Ascending aorta (tissue), 2 donors: ENCODE measurements at regions of chr11 and their contacts with region 1.

Region 1: DNA sequence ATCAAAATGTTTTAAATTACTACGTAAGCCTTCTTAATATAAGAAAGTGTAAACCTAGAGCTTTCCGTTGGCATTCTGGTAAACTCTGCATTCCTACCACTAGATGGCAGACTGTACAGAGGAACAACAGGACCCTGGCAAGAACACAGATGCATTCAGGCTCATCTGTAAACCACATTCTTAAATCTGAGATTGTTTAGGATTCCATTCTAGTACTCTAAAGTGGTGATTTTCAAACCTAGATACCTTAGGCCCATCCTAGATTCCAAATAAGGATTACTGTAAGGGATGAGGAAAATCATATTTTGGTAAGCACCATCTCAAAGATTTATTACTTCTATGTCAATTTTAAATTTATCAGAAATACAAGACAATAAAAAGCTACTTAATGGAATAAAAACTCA is 26.9 kb downstream of the PICALM start:
- DNase-seq: peak in 1 of 2 donors; percentile 87
- H3K4me3 ChIP-seq: peak overlapping the region; percentile 47 to 52
- H3K27ac ChIP-seq: peak overlapping the region; percentile 48 to 61
- H3K4me1 ChIP-seq: peaks cover 11 to 65% of the 10 kb centered on the region in 2 donors
- H3K27me3 ChIP-seq: no peaks in the 10 kb centered on the region
- CTCF ChIP-seq: peak; percentile 81 to 85 (median 82)

Region 2: GRCh38 chr11:85525686-85526085 is 516.3 kb before region 1 on chr11:
- intact Hi-C with region 1: no loop called
- DNase-seq: no peak
- H3K4me3 ChIP-seq: no peak overlapping the region
- H3K27ac ChIP-seq: no peak overlapping the region
- H3K4me1 ChIP-seq: no peaks in the 10 kb centered on the region
- H3K27me3 ChIP-seq: no peaks in the 10 kb centered on the region
- CTCF ChIP-seq: no peak

Region 3: DNA sequence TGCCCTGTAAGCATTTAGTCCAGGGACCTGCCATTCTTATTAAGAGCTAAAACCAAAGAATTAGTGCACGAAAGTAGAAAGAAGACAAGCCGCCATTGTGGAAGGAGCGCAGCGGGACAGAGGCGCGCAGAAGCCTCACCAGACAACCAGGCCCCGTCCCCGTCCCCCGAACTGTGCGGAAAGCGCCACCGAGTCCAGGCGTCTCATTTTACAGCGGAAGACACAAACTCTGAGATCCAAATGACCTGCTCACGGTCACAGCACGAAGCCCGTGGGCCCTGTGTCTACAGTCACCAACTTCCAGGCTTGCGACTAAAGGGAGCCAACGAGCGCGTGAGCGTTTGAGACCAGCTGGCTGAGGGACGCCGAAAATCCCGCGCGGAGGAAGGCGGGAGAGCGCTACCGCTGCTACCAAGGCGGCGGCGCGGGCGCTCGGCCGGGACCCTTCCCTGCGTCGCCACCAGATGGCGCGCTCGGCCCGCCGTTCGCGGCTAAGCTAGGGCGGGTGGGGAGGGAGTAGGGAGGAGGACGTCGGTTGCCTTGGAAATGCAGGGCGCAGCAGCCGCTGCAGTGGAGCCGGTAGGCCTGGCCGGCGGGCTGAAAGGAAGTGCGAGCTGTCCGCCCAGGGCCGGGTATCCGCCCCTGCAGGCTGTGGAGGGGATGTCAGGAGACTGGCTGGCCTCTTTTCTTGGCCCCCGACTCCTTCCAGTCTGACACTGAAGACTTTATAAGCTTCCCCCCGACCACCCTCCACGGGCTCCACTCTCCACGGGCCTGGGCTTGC is 187.2 kb before region 1 on chr11:
- intact Hi-C with region 1: loop called (anchors 10 kb)
- DNase-seq: peak; percentile 65 to 95
- H3K4me3 ChIP-seq: peak overlapping the region; percentile 73 to 77
- H3K27ac ChIP-seq: peak overlapping the region; percentile 79 to 83
- H3K4me1 ChIP-seq: peaks cover 0 to 7% of the 10 kb centered on the region in 2 donors
- H3K27me3 ChIP-seq: no peaks in the 10 kb centered on the region
- CTCF ChIP-seq: peak; percentile 94 to 99 (median 99)

Region 4: DNA sequence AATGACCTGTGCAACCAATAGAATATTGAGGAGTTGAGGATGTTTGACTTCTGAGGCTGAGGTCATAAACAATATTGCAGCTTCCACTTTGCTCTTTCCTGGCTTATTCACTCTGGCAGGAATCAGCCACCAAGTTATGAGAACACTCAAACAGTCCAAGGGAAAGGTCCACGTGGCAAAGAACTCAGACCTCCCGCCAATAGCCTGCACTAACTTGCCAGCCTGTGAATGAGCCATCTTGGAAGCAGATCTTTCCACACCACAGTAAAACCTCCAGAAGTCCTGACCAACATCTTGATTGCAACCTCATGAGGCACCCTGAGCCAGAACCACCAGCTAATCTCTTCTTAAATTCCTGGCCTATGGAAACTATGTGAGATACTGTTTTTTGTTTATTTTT is 49.6 kb after region 1 on chr11:
- intact Hi-C with region 1: loop called (anchors 2 kb)
- DNase-seq: peak; percentile 14 to 87
- H3K4me3 ChIP-seq: no peak overlapping the region
- H3K27ac ChIP-seq: peak overlapping the region; percentile 76 to 77
- H3K4me1 ChIP-seq: peaks cover 0 to 12% of the 10 kb centered on the region in 2 donors
- H3K27me3 ChIP-seq: no peaks in the 10 kb centered on the region
- CTCF ChIP-seq: no peak

Region 5: DNA sequence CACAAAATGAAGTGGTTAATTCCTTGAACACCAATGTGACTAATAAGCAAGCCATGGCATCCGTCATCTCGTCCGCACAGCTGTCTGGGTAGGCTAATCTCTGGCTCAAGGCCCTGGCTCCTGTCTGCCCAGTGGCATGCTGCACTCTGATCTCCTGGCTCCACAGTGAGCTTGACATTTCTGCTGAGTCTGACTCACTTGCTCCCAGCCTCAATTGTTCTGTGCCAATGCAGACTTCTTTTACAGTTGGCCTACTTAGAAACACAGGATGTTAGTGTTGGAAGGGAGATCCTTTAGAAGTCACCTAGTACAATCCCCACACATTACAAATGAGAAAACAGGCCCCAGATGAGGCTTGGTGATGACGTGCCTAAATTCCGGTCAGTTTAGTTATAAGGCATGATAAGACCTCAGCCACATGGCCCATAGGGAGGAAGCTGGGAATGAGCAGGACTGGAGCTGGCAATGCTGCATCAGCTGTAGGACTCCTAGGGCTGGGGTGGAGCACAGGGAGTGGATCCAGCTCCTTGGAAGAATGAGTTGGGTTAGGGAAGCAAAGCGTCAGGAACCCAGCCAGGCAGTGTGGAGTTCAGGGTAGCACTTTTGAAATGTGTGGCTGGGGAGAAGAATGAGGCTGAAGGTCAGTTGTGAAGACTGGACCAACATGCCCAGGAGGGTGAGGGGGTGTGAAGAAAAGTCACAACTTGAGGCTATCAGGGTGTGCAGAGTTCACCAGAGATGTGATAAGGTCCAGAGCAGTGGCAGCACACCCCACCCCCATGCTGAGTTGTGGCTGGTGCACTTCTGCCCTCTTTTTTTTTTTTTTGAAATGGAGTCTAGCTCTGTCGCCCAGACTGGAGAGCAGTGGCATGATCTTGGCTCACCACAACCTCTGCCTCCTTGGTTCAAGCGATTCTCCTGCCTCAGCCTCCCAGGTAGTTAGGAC is 132.4 kb after region 1 on chr11:
- intact Hi-C with region 1: loop called (anchors 5 kb)
- DNase-seq: peak; percentile 73 to 97
- H3K4me3 ChIP-seq: no peak overlapping the region
- H3K27ac ChIP-seq: peak overlapping the region; percentile 72 to 88
- H3K4me1 ChIP-seq: peaks cover 9 to 16% of the 10 kb centered on the region in 2 donors
- H3K27me3 ChIP-seq: no peaks in the 10 kb centered on the region
- CTCF ChIP-seq: no peak

Region 6: GRCh38 chr11:86193297-86194095 is 151.5 kb after region 1 on chr11:
- intact Hi-C with region 1: loop called (anchors 2 kb)
- DNase-seq: peak; percentile 19 to 86
- H3K4me3 ChIP-seq: peak overlapping the region; percentile 0 to 27
- H3K27ac ChIP-seq: peak overlapping the region; percentile 35 to 49
- H3K4me1 ChIP-seq: peaks cover 4% of the 10 kb centered on the region in 2 donors
- H3K27me3 ChIP-seq: no peaks in the 10 kb centered on the region
- CTCF ChIP-seq: peak; percentile 68 to 72 (median 70)

Region 7: GRCh38 chr11:86218125-86219084 is 176.4 kb after region 1 on chr11:
- intact Hi-C with region 1: loop called (anchors 5 kb)
- DNase-seq: peak in 1 of 2 donors; percentile 77
- H3K4me3 ChIP-seq: peak overlapping the region; percentile 37 to 53
- H3K27ac ChIP-seq: peak overlapping the region; percentile 35 to 39
- H3K4me1 ChIP-seq: peaks cover 0 to 10% of the 10 kb centered on the region in 2 donors
- H3K27me3 ChIP-seq: no peaks in the 10 kb centered on the region
- CTCF ChIP-seq: peak; percentile 76 to 91 (median 91)